ENCODE measurements at regions of chr20 and their contacts with region 1.

Region 1: GRCh38 chr20:41617931-41618806 is at the start of gene CHD6:
- DNase-seq: peak; percentile 100
- ATAC-seq: peak; percentile 99 to 100 (median 99)
- H3K4me3 ChIP-seq: peak within 1 kb of the TSS; percentile 59 to 94 (median 76)
- H3K27ac ChIP-seq: peak within 1 kb of the TSS; percentile 77 to 95 (median 86)
- H3K4me1 ChIP-seq: peaks cover 0 to 52% (median 34%) of the 10 kb centered on the region in 9 donors
- H3K27me3 ChIP-seq: no peaks in the 10 kb centered on the region
- CTCF ChIP-seq: no peak
- total RNA-seq, gene CHD6: 27.1 to 52.9 (median 41.0) TPM

Region 2: DNA sequence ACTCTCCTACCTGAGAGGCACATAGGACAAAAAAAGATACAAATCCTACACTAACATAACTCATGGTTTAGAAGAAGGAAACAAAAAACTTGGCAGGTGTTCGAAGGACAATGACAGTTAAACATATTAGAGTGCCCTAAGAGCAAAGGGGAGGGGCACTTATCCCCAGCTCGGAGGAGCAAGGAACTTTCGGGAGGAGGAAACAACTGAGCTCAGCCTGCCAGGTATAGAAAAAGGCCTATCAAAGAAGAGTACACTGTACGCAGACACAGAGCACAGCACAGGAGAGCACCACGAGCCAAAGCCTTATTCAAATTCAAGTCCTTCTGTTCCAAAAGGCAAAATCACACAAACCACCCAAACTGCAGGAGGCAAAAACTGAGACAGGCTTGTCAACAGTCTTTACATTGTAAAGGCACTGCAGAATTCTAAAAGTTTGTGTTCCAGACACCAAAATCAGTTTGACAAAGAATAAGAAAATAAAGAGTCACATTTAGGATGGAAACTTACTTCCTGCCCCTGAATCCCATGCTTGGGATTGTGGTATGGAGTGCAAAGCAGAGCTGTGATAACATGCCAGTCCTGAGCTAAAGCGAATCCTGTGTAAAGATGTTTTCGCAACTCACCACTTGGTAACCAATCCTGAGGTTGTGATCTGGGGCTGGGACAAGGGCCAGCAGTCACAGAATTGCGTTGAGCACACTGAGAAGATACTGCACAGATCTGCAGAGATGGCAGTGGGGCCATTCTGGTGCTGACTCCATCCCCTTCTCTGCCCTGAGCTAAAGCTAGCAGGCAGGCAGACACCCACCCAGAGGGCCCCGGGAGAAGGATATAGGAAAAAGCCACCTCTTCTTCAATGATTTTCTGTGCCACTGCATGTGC is 108.6 kb before region 1 on chr20:
- intact Hi-C with region 1: loop called in 3 of 10 experiments (anchors 5 to 10 kb)
- DNase-seq: peak; percentile 31 to 49
- ATAC-seq: peak; percentile 48 to 87 (median 76)
- H3K4me3 ChIP-seq: no peak overlapping the region
- H3K27ac ChIP-seq: peak overlapping the region in 9 of 10 donors; percentile 2 to 73 (median 54)
- H3K4me1 ChIP-seq: peaks cover 5 to 72% (median 47%) of the 10 kb centered on the region in 9 donors
- H3K27me3 ChIP-seq: no peaks in the 10 kb centered on the region
- CTCF ChIP-seq: no peak

Region 3: GRCh38 chr20:41524980-41525613 is 93.1 kb before region 1 on chr20:
- intact Hi-C with region 1: loop called in 3 of 10 experiments (anchors 10 kb)
- DNase-seq: peak; percentile 75 to 86
- ATAC-seq: peak; percentile 78 to 97 (median 94)
- H3K4me3 ChIP-seq: peak overlapping the region in 5 of 10 donors; percentile 5 to 28 (median 14)
- H3K27ac ChIP-seq: peak overlapping the region in 5 of 10 donors; percentile 17 to 49 (median 26)
- H3K4me1 ChIP-seq: peaks cover 0 to 40% (median 33%) of the 10 kb centered on the region in 9 donors
- H3K27me3 ChIP-seq: no peaks in the 10 kb centered on the region
- CTCF ChIP-seq: no peak

Region 4: DNA sequence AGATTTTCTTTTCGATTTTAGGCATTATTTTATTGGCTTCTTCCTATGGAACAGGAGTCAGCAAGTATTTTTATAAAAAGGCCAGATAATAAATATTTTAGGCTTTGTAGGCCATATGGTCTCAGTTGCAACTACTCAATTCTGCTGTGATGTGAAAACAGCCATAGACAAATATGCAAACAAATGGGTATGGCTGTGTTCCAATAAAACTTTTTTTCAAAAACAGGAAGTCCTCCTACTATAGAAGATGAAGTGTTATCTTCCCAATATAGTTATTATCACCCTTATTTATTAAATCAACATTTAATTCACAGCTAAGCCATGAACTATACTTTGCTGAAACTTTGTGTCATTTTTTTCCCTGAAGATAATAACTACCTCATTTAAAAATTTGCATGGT is 57.2 kb before region 1 on chr20:
- intact Hi-C with region 1: loop called in 1 of 10 experiments (anchors 10 kb)
- DNase-seq: no peak
- ATAC-seq: no peak
- H3K4me3 ChIP-seq: no peak overlapping the region
- H3K27ac ChIP-seq: no peak overlapping the region
- H3K4me1 ChIP-seq: peaks cover 0 to 53% (median 14%) of the 10 kb centered on the region in 9 donors
- H3K27me3 ChIP-seq: no peaks in the 10 kb centered on the region
- CTCF ChIP-seq: no peak

Region 5: GRCh38 chr20:41572010-41572560 is 46.1 kb before region 1 on chr20:
- intact Hi-C with region 1: loop called in 2 of 10 experiments (anchors 5 to 10 kb)
- DNase-seq: no peak
- ATAC-seq: peak in 4 of 8 donors; percentile 16 to 39 (median 34)
- H3K4me3 ChIP-seq: no peak overlapping the region
- H3K27ac ChIP-seq: no peak overlapping the region
- H3K4me1 ChIP-seq: peaks cover 10 to 98% (median 72%) of the 10 kb centered on the region in 9 donors
- H3K27me3 ChIP-seq: no peaks in the 10 kb centered on the region
- CTCF ChIP-seq: peak in 2 of 9 donors; percentile 14 to 28

Region 6: DNA sequence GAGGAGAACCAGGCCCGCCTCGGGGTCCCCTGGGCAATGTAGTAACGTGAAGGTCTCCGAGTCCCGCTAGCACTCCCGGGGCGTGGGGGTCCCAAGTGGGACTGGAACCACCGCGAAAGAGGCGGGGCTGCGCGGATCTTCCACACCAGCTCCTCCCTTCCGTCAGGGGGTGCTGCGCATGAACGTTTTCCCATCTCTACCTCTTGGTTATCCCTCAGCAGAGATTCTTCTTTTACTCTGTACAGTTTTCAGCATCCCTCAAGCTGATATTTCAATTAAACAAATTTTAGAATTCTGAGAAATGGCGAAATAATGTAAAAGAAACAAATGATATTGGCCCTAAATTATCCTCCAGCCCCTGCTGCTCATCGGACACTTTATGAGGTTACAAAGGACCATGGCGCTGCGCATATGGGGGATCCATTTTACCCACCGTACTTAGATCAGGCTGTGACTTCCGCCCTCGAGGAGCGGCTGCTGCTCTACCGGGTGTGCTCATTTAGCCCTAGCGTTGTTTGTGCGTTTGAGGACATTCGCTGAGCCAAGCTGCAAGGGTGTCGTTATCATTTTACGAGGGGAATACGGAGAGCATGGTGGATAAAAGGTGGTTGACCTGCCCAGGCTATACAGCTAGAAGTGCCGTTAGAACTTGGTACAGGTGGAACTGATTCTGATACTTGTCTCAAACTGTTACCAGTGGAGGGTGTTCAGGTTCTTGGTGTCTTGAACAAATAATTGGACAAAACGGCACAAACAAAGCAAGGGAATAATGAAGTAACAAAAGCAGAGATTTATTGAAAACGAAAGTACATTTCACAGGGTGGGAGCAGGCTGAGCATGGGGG is 75.2 kb after region 1 on chr20:
- intact Hi-C with region 1: loop called in 4 of 10 experiments (anchors 2 to 5 kb)
- DNase-seq: peak; percentile 74 to 82
- ATAC-seq: peak; percentile 94 to 98 (median 96)
- H3K4me3 ChIP-seq: peak overlapping the region; percentile 62 to 95 (median 82)
- H3K27ac ChIP-seq: peak overlapping the region; percentile 81 to 99 (median 93)
- H3K4me1 ChIP-seq: peaks cover 0 to 16% (median 6%) of the 10 kb centered on the region in 9 donors
- H3K27me3 ChIP-seq: peaks cover 0 to 5% (median 0%) of the 10 kb centered on the region in 7 donors
- CTCF ChIP-seq: peak in 8 of 9 donors; percentile 34 to 79 (median 60)